Astrocyte of the cerebellum (primary cell): ENCODE measurements at regions of chr16 and their contacts with region 1.

Region 1: GRCh38 chr16:84138824-84139627 is 6.0 kb downstream of the HSDL1 start:
- DNase-seq: peak; percentile 26
- H3K4me3 ChIP-seq: no peak overlapping the region
- CTCF ChIP-seq: no peak

Region 2: GRCh38 chr16:84084570-84085270 is 54.3 kb before region 1 on chr16:
- in situ Hi-C with region 1: loop called (anchors 5 kb)
- DNase-seq: peak; percentile 45
- H3K4me3 ChIP-seq: no peak overlapping the region
- CTCF ChIP-seq: peak; percentile 84

Region 3: DNA sequence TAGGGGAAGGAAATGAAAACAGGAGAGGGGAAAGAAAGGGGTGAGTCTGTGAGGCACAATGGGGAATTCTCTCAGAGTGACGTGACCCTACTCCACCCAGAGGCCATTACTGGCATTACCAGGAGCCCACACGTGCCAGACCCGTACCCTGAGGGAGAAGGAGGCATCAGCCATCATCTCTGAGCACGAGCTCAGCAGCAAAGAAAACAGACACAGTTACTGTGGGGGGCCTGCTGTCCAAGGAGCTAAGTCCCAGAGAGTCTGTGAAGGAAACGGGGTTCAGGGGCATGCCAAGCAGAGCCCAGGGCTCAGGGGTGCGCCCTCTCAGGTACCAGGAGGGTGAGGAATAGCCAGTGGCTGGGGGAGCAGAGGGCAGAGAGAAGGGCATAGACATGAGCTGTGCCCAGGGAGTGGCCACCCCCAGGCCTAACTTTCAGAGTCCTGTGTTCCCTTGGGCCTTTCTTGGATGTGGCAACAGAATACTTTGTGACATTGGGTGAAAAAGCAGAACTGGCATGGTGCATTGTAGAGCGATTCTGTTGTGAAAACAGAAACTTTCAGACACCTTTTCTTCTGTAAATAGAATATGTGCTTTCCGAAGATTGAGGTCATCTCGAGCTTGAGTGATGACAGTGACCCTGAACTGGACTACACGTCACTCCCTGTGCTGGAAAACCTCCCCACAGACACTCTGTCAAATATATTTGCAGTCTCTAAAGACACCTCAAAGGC is 36.5 kb after region 1 on chr16:
- in situ Hi-C with region 1: no loop called
- DNase-seq: no peak
- H3K4me3 ChIP-seq: no peak overlapping the region
- CTCF ChIP-seq: peak; percentile 66

Region 4: GRCh38 chr16:84194470-84195200 is 55.6 kb after region 1 on chr16:
- in situ Hi-C with region 1: loop called (anchors 5 kb)
- DNase-seq: no peak
- H3K4me3 ChIP-seq: no peak overlapping the region
- CTCF ChIP-seq: no peak

Region 5: DNA sequence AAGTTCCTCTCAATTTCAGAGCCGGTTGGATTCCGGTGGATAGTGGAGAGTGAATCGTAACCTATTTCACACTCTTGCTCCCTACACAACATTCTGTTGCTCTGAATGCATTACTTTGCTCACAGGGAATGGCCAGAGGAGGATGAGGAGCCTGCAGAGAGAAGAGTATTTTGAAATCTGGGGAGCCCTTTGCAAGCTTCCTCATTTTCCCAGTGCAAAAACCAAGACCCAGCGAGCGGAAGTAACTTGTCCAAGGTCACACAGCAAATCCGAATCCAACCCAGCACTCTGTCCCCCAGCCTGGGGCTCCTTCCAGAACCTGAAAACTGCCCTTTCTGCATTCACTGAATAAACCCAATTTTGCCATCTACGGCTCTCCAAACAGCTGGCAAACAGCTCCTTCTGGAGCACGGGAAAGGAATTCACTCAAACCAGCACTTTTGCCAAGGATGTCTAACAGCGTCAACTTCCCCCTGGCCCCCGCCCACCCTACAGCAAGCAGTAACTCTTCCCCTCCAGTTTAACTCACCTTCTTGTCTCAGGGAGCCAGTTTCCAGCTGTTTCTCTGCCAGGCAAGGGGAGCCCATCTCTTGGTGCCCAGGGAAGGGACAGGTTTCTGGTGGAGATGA is 100.2 kb after region 1 on chr16:
- in situ Hi-C with region 1: loop called (anchors 5 kb)
- DNase-seq: no peak
- H3K4me3 ChIP-seq: no peak overlapping the region
- CTCF ChIP-seq: no peak